Activated B cell treated with CpG ODN at 0.5 μM for 24 hours (primary cell): ENCODE measurements at regions of chr1 and their contacts with region 1.

Region 1: DNA sequence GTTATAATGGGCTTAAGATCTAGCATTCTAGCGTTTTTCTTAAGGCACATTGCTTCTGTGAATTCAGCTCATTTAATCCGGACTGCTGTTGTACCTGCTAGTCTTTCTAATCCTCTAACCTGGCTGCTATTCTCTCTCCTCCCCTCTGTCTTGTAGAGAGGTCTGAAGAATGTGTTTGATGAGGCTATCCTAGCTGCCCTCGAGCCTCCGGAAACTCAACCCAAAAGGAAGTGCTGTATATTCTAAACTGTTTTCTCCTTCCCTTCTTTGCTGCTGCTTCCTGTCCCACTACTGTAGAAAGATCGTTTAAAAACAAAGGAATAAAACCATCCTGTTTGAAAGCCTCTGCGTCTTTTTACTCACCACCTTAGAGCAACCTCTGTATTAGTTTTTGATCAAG is 37.3 kb downstream of the CDC42 start:
- DNase-seq: no peak
- ATAC-seq: no peak
- H3K4me3 Mint-ChIP-seq: peak overlapping the region; percentile 42
- H3K27ac Mint-ChIP-seq: peak overlapping the region; percentile 57
- H3K4me1 Mint-ChIP-seq: peaks cover 83% of the 10 kb centered on the region
- H3K27me3 Mint-ChIP-seq: no peaks in the 10 kb centered on the region
- CTCF ChIP-seq: no peak

Region 2: DNA sequence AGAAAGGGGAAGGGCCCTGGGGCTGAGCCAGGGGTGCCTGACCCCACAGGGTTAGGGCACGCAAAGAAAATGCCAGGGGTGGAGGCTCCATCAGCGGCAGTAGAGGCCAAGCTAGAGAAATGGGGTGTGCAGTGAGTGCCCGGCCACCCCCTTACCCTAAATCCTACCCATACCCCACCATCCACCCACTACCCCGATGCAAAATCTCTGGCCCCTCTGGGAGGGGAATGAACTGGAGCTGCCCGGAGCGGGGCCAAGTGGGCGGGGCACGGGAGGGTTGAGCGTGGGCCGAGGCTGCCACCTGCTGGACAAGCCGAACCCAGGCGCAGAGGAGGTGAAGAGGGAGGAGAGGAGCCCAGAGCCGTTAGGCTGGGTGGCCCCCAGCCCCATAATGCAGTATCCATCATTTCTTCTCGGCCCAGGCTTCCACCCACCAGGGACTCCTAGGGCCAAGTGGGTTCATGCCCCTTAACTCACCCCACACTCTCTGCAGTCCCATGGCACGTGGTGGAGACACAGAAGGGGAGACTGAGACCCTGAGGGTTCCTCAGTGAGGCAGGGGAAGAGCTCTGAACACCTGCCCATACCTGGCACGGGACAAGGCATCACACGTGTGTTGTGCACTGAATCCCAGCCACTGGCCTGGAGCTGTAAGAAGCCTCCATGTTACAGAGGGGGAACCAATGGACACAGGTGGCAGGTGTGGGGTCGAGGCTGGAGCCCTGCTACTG is 552.3 kb after region 1 on chr1:
- CTCF ChIA-PET with region 1: interaction called, 3 read pairs
- POLR2A ChIA-PET with region 1: no interaction called
- intact Hi-C with region 1: loop called (anchors 5 kb)
- DNase-seq: peak; percentile 67
- ATAC-seq: peak; percentile 93
- H3K4me3 Mint-ChIP-seq: no peak overlapping the region
- H3K27ac Mint-ChIP-seq: no peak overlapping the region
- H3K4me1 Mint-ChIP-seq: no peaks in the 10 kb centered on the region
- H3K27me3 Mint-ChIP-seq: peaks cover 16% of the 10 kb centered on the region
- CTCF ChIP-seq: peak; percentile 28

Region 3: GRCh38 chr1:22976461-22977243 is 886.9 kb after region 1 on chr1:
- CTCF ChIA-PET with region 1: no interaction called
- POLR2A ChIA-PET with region 1: interaction called, 10 read pairs
- intact Hi-C with region 1: no loop called
- DNase-seq: peak; percentile 23
- ATAC-seq: peak; percentile 94
- H3K4me3 Mint-ChIP-seq: no peak overlapping the region
- H3K27ac Mint-ChIP-seq: no peak overlapping the region
- H3K4me1 Mint-ChIP-seq: no peaks in the 10 kb centered on the region
- H3K27me3 Mint-ChIP-seq: peaks cover 25% of the 10 kb centered on the region
- CTCF ChIP-seq: no peak